Ovary (tissue), 10 donors: ENCODE measurements at regions of chr1 and their contacts with region 1.

Region 1: DNA sequence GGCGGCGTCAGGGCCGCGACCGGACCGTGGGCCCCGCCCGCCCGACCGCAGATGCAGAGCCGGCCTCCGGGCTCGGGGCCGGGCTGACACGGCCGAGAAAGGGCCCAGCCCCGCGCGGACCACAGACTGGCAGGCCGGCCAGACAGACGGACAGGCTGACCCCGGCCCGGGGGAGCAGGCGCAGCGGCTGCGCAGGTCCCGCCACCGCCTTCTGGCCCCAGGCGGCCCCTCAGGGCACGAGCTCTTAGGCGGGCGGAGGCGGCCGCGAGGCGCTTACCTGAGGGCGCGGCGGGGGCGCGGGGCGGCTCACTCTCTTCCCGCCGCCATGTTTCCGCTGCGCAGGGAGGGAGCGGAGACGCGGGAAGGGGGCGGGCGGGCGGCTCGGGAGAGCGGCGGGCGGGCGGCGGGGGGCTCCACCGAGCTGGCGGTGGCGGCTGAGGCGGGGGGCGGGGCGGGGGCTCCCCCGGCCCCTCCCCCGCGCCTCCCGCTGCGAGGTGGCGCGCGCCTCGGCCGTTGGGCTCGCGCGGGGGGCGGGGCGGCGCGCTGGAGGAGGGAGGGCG is at the start of gene SCMH1:
- DNase-seq: peak; percentile 53 to 76 (median 60)
- H3K4me3 ChIP-seq: peak within 1 kb of the TSS; percentile 82
- H3K27ac ChIP-seq: peak within 1 kb of the TSS; percentile 99 to 100
- H3K4me1 ChIP-seq: peaks cover 5% of the 10 kb centered on the region
- H3K27me3 ChIP-seq: no peaks in the 10 kb centered on the region
- CTCF ChIP-seq: no peak
- EP300 ChIP-seq: no peak
- POLR2A ChIP-seq: peak; percentile 22
- total RNA-seq, gene SCMH1: 33.4 to 80.2 (median 53.2) TPM

Region 2: GRCh38 chr1:41038105-41038504 is 203.8 kb before region 1 on chr1:
- intact Hi-C with region 1: loop called in 1 of 4 experiments (anchors 10 kb)
- DNase-seq: no peak
- H3K4me3 ChIP-seq: no peak overlapping the region
- H3K27ac ChIP-seq: no peak overlapping the region
- H3K4me1 ChIP-seq: no peaks in the 10 kb centered on the region
- H3K27me3 ChIP-seq: no peaks in the 10 kb centered on the region
- CTCF ChIP-seq: no peak
- EP300 ChIP-seq: no peak
- POLR2A ChIP-seq: no peak

Region 3: DNA sequence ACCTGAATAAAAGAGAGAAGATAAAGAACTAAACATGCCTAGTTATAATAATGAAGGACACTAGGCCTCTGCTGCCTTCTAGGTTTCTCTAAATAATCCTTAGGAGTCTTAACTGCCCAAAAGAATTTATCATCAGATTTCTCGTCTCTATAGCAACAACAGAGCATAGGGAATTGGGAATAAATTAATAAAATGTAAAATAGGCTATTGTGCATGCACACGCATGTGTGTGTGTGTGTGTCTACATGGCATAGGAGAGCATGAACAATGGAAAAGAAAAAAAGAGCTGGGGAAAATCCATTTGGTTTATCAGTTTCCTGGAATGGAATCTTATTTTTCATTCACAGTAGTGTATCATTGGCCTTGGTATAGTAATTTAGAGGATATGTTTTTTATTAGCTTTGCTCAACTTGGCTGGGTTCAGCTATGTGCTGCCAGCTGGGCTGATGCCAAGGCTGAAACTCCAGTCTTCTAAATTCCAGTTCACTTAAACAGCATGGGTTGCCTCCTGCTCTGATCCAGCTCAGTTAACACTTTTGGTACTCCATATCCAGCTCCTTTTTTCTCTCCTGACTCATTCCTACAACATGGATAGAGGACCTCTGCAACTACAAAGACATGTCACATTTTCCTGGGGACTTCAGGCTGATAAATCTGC is 139.8 kb before region 1 on chr1:
- intact Hi-C with region 1: loop called in 1 of 4 experiments (anchors 5 kb)
- DNase-seq: peak; percentile 91 to 96 (median 95)
- H3K4me3 ChIP-seq: no peak overlapping the region
- H3K27ac ChIP-seq: no peak overlapping the region
- H3K4me1 ChIP-seq: peaks cover 6% of the 10 kb centered on the region
- H3K27me3 ChIP-seq: no peaks in the 10 kb centered on the region
- CTCF ChIP-seq: no peak
- EP300 ChIP-seq: no peak
- POLR2A ChIP-seq: no peak

Region 4: DNA sequence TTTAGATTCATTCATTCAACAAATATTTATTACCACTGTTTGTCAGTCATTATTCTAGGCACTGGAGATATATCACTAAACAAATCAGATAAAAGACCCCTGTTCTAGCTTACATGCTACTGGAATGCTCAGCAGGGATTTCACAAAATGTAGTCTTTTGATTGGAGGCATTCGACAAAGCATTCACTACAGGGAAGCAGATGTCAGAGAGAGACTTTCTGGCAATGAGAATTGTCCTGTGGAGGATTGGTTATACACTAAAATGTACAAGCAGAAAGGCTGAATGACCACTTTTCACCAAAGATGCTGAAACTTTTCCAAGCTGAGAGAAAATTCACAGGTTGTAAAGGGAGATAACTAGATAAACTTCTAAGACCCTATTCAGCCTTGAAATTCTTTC is 57.4 kb before region 1 on chr1:
- intact Hi-C with region 1: no loop called
- DNase-seq: no peak
- H3K4me3 ChIP-seq: no peak overlapping the region
- H3K27ac ChIP-seq: no peak overlapping the region
- H3K4me1 ChIP-seq: no peaks in the 10 kb centered on the region
- H3K27me3 ChIP-seq: no peaks in the 10 kb centered on the region
- CTCF ChIP-seq: no peak
- EP300 ChIP-seq: no peak
- POLR2A ChIP-seq: no peak

Region 5: DNA sequence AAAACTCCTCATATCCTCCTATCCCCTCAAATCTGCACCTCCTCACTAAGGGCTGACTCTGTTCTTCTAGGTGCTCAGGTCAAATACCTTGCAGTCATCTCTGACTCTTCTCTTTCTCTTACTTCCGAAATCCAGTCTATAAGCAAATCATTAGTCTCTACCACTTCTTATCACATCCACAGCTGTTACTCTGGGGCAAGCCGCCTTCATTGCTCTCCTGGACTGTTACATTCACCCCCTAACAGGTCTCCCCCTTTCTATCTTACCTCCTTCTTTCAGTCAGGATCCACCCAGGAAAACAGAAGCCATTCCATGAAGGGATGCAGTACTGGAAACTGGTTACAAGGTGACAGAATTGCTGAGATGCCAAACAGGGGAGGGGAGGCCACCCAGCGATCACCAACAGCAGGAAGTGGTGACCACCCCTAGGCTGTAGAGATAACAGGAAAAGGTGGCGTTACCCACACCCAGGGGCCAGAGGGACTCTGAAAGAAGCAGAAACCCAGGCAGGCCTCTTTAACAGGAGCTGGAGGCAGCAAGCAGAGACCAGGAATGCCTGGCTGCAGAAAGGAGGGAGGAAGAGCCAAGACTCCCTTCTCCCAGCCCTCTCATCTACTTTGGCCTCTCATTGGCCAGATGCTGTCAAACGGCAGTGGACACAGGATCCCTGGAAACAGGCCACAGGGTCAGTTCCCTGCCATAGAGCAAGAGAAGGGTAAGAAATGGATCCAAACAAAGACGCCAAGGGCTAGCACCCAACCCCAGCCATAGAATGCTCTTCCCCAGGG is 63.9 kb after region 1 on chr1:
- intact Hi-C with region 1: no loop called
- DNase-seq: no peak
- H3K4me3 ChIP-seq: no peak overlapping the region
- H3K27ac ChIP-seq: no peak overlapping the region
- H3K4me1 ChIP-seq: no peaks in the 10 kb centered on the region
- H3K27me3 ChIP-seq: no peaks in the 10 kb centered on the region
- CTCF ChIP-seq: no peak
- EP300 ChIP-seq: no peak
- POLR2A ChIP-seq: no peak